ENCODE measurements at regions of chr1 and their contacts with region 1.

Region 1: DNA sequence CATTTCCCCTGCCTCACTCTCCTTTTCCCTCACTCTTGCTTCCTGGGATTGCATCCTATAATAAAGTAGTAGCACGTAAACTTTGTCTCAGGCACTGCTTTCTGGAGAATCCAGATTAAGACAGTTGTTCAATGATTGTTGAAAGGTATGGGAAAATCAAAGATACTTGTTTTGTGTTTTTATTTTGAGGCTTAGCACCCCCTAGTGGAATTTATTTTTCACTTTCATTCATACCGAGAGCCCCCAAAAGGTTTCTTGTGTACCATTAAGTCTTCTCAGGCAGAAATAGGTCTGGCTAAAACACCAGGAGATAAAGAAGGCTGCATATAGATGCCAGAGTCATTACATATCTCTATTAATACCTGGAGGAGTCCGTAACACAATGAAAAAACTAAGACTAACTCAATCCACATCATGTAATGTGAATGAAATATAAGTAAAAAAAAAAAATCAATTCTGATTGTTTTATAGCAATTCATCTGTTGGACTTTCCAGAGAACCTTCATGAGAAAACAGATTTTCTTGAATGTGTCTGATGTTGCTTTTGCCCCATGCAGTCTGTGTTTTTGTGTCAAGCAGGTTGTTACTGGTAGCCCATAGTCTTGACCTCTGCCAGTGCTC is 103.5 kb downstream of the RPE65 start:
- DNase-seq: no peak
- H3K4me3 ChIP-seq: no peak overlapping the region
- H3K27ac ChIP-seq: no peak overlapping the region
- H3K4me1 ChIP-seq: no peaks in the 10 kb centered on the region
- H3K27me3 ChIP-seq: no peaks in the 10 kb centered on the region
- CTCF ChIP-seq: peak; percentile 27 to 50 (median 42)
- EP300 ChIP-seq: no peak
- POLR2A ChIP-seq: no peak

Region 2: DNA sequence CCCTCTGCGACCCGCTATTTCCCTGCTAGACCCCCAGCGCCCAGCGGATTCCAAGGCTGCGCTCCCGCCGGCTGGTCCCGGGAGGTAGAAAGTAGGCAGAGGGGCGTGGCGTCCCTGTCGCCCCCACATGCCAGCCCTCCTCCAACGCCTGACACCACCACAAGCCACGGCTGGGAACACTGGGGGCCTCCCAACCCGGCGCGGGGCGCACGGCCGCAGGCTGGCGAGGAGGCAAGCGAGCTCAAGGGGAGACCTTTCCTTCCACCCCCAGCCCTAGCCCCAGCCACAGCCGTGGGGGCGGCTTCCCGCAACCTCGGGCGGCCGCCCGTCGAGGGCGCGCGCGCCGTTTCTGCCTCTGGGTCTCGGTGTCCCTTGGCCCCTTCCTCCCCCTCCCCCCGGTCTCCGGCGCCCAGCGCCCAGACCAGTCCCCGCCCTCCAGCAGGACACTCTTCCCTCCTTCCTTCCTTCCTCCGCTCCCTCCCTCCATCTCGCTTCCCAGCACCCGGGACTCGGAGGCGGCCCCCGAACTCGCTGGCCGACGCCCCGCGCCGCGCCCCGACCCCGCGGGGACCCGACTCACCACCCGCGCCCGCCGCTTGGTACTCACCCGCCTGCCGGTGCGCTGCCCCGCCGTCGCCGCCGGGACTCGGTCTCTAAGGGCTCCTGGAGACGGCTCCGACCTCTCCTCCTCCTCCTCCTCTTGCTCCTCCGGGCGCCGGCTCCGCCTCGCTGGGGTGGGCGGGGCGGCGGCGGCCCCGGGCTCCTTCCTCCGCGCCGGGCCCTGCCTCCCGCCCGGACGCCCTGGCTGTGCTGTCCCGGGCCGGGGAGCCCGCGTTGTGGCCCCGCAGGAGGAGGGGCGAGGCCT is 513.3 kb before region 1 on chr1 and contains the start of gene GNG12:
- in situ Hi-C with region 1: loop called in 1 of 4 experiments (anchors 25 kb)
- intact Hi-C with region 1: loop called (anchors 10 kb)
- DNase-seq: peak; percentile 75
- H3K4me3 ChIP-seq: peak within 1 kb of the TSS; percentile 56 to 86 (median 62)
- H3K27ac ChIP-seq: peak within 1 kb of the TSS; percentile 86 to 95 (median 90)
- H3K4me1 ChIP-seq: peaks cover 7 to 47% (median 19%) of the 10 kb centered on the region in 4 donors
- H3K27me3 ChIP-seq: peaks cover 4% of the 10 kb centered on the region
- CTCF ChIP-seq: no peak
- EP300 ChIP-seq: no peak
- POLR2A ChIP-seq: peak; percentile 39
- total RNA-seq, gene GNG12: 19.1 to 180 (median 112) TPM